OCI-LY7 (cell line): ENCODE measurements at regions of chr2 and their contacts with region 1.

Region 1: DNA sequence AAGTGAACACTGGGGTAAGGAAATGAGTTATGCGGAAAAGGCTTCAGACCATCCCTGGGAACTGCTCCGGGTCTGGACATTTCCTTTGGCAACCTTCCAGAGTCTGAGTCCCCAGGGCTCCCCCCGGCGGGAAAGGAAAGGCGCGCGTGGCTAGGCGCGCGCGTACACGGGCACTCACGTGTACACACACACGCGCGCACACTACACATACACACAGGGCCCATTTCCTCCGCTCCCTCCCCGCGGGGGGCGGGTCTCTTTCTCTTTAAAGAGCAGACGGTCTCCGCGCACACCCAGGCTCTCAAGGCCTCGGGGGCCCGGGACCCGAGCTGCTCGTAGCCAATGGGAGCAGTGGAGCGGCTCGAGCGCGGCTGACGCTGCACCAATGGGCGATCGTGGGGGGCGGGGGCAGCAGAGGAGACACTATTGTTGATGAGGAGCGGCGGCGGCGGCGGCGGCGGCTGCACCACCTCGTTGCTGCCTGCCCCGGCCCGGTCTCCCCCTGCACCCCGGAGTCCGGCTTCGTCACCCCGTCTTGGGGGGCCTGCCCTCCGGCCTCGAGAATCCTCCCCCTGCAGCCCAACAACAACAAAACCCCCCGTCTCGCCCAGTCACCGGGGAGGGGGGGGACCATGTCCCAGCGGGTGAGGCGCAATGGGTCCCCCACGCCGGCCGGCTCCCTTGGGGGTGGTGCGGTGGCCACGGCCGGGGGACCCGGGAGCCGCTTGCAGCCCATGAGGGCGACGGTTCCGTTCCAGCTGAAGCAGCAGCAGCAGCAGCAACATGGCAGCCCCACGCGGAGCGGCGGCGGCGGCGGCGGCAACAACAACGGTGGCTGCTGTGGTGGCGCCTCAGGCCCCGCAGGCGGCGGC is at the start of gene FAM117B:
- DNase-seq: peak; percentile 99
- H3K4me3 ChIP-seq: peak within 1 kb of the TSS; percentile 83
- H3K27ac ChIP-seq: peak within 1 kb of the TSS; percentile 69
- H3K4me1 ChIP-seq: peaks cover 38% of the 10 kb centered on the region
- CTCF ChIP-seq: 0 out of 2 replicates have a peak, but pooled peaks have one; percentile 6
- total RNA-seq, gene FAM117B: 3.1 and 4.2 TPM in 2 replicates

Region 2: DNA sequence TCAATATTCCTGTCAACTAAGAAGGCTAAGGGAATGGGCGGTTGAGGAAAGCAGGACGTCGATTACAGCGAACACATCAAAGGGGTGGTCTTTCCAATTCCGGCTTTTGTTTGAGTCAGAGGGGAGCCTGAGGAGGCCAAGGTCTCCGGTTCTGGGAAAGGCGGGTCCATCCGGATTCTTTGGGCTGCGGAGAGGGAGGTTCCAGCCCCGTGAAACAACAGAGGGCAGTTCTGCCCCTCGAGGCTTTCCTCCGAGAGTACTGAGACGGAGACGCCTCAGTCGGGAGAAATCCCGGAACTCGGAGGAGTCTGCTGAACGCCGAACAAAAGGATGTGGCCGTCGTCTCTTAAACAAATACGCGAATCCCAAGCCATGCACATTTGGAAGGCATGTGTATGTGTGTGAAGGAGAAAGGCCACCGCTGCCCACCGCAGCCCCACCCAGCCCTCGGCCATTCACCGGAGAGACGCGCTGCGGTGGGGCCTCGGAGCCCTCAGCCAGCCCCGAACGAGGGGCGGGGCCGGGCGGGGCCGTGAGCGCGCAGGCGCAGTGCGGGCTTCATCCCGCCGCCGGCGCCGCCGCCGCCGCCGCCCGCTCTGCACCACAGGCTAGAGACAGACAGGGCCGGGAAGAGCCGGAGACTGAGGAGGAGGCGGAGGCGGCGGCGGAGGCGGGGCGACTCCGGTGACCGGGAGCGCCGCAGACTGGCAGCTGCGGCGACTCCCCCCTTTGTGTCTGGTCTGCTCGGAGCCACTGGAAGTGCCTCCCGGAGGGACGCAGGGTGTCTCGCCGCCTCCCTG is 259.0 kb before region 1 on chr2 and contains the start of gene BMPR2:
- CTCF ChIA-PET with region 1: no interaction called
- POLR2A ChIA-PET with region 1: interaction called, 3 read pairs
- intact Hi-C with region 1: loop called (anchors 5 kb)
- DNase-seq: peak; percentile 84
- H3K4me3 ChIP-seq: peak within 1 kb of the TSS; percentile 91
- H3K27ac ChIP-seq: peak within 1 kb of the TSS; percentile 47
- H3K4me1 ChIP-seq: peaks cover 24% of the 10 kb centered on the region
- CTCF ChIP-seq: no peak
- total RNA-seq, gene BMPR2: 3.2 and 4.3 TPM in 2 replicates

Region 3: DNA sequence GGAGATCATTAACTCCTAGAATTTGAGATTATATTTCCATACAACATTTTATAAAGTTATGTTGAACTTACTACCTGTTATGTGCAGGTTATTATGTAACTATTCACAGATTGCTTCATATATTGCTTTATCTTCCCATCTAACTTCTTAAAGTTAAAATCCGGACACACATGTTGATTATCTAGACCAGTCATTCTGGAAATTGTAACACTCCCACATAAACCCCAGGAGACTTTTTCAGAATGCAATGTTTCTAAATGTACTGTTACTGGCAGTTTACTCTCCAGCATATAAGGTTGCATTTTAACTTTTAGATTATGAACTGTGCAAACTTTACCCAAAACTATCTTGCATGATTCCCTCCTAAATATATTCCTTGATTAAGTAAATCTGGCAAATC is 70.6 kb before region 1 on chr2:
- CTCF ChIA-PET with region 1: no interaction called
- POLR2A ChIA-PET with region 1: no interaction called
- intact Hi-C with region 1: no loop called
- DNase-seq: no peak
- H3K4me3 ChIP-seq: no peak overlapping the region
- H3K27ac ChIP-seq: no peak overlapping the region
- H3K4me1 ChIP-seq: no peaks in the 10 kb centered on the region
- CTCF ChIP-seq: no peak

Region 4: GRCh38 chr2:202609381-202610145 is 25.2 kb before region 1 on chr2:
- CTCF ChIA-PET with region 1: no interaction called
- POLR2A ChIA-PET with region 1: no interaction called
- intact Hi-C with region 1: no loop called
- DNase-seq: no peak
- H3K4me3 ChIP-seq: no peak overlapping the region
- H3K27ac ChIP-seq: no peak overlapping the region
- H3K4me1 ChIP-seq: no peaks in the 10 kb centered on the region
- CTCF ChIP-seq: no peak

Region 5: GRCh38 chr2:202671317-202672035 is 36.7 kb after region 1 on chr2:
- CTCF ChIA-PET with region 1: interaction called, 3 read pairs
- POLR2A ChIA-PET with region 1: interaction called, 4 read pairs
- intact Hi-C with region 1: loop called (anchors 1 kb)
- DNase-seq: no peak
- H3K4me3 ChIP-seq: no peak overlapping the region
- H3K27ac ChIP-seq: no peak overlapping the region
- H3K4me1 ChIP-seq: peaks cover 26% of the 10 kb centered on the region
- CTCF ChIP-seq: no peak

Region 6: DNA sequence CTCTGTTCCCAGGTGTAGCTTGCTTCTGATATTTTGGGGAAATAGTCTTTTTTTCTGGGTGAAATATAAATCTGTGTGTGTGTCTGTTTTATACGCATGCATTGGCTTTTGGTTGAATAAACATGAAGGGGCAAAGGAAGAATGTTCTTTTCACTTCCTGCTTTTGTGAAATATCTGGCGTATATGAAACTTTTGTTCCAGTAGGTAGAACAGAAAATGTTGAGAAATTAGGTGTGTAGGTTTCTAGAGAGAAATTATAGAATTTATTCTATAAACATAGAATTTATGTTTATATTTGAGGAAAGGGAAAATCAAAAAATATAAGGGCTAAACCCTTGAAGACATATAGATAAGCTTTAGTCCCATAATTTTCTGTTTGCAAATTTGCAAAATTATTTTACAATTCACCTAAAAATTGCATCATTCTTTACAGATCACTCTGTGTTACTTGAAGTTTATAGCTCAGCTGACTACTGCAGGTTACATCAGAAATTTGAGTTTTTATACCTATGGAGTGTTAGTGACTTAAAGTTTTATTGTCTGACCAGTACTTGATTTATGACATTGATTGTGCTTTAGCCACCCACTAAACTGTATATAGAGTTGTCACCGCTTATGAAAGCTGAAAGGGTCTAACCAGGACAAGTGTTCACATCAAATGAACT is 116.1 kb after region 1 on chr2:
- CTCF ChIA-PET with region 1: no interaction called
- POLR2A ChIA-PET with region 1: interaction called, 4 read pairs
- intact Hi-C with region 1: loop called (anchors 2 kb)
- DNase-seq: peak; percentile 38
- H3K4me3 ChIP-seq: no peak overlapping the region
- H3K27ac ChIP-seq: peak overlapping the region; percentile 8
- H3K4me1 ChIP-seq: peaks cover 12% of the 10 kb centered on the region
- CTCF ChIP-seq: no peak